AG04450 (cell line): ENCODE measurements at regions of chr4 and their contacts with region 1.

Region 1: DNA sequence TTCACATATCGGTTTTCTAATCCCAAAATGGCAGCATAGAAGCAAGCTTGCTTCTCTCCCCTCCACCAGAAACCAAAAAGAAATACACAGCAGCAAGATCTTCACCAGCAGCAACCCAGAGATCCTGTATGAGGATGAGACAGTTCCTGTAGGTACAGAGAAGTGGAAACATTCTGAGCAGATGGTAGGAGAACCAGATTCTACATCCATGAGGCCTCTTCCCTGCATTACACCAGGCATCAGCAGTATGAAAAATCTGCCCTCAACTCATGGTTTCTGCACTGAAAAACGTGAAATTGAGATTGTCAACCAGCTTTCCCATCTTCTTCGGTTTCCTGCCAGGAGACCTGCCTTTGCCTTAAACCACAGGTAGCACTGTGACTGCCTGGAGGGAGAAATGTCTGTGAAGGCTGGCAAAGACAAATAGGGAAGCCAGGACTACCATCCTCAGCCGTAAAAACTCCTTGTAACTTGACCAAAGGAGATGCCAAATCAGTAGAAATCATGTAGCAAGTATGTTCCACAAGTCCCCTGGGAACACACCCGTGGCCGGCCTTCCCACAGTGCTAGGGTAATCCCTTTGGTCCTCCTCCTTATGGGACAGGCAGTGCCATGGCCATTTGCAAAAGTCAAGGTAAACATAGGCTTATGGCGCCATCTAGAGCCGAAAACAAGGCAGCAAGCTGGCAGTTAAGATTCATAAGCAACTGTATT is 24.0 kb upstream of the MTHFD2L start:
- DNase-seq: peak; percentile 65
- H3K4me3 ChIP-seq: no peak overlapping the region
- H3K27ac ChIP-seq: no peak overlapping the region
- H3K27me3 ChIP-seq: no peaks in the 10 kb centered on the region
- CTCF ChIP-seq: peak; percentile 92

Region 2: GRCh38 chr4:73573794-73574406 is 560.0 kb before region 1 on chr4:
- CTCF ChIA-PET with region 1: interaction called, 60 read pairs
- POLR2A ChIA-PET with region 1: no interaction called
- DNase-seq: peak; percentile 75
- H3K4me3 ChIP-seq: no peak overlapping the region
- H3K27ac ChIP-seq: no peak overlapping the region
- H3K27me3 ChIP-seq: peaks cover 3% of the 10 kb centered on the region
- CTCF ChIP-seq: peak; percentile 99

Region 3: DNA sequence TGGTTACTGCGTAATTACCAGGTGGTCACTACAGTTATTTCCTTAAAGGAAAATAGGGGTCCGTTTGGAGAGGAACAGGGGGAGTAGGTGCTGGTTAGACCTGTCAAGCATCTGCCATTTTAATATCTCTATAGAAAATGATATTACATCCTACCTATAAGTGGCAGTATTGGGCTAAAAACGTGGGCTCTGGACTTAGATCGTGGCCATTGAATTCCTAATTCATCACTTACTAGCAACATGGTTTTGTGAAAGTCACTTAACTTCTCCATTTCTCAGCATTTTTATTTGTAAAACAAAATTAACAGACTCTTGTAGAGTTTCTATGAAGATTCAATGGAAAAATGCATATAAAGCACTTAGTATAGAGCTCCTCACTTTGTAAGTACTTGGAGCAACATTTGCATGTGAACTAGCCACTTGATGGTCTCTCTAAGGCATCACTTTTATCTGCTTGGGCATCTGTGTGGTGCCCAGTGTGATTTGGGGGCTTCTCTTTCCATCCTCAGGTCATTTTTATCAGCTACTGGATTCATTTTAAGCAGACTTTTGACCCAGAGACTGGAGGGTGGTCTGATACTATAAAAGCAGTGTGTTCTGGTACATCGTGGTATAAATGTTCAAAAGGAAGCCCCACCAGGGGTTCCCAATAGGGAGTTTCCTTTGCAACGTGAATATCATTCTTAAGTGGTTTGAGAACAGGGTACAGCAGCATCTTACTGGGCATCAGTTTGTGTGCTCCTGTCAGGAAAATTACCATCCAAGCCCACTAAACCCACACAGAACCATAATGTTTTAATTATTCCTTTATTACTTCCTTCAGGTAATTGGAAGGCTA is 471.0 kb before region 1 on chr4:
- CTCF ChIA-PET with region 1: interaction called, 92 read pairs
- POLR2A ChIA-PET with region 1: no interaction called
- DNase-seq: no peak
- H3K4me3 ChIP-seq: no peak overlapping the region
- H3K27ac ChIP-seq: no peak overlapping the region
- H3K27me3 ChIP-seq: no peaks in the 10 kb centered on the region
- CTCF ChIP-seq: peak; percentile 60

Region 4: DNA sequence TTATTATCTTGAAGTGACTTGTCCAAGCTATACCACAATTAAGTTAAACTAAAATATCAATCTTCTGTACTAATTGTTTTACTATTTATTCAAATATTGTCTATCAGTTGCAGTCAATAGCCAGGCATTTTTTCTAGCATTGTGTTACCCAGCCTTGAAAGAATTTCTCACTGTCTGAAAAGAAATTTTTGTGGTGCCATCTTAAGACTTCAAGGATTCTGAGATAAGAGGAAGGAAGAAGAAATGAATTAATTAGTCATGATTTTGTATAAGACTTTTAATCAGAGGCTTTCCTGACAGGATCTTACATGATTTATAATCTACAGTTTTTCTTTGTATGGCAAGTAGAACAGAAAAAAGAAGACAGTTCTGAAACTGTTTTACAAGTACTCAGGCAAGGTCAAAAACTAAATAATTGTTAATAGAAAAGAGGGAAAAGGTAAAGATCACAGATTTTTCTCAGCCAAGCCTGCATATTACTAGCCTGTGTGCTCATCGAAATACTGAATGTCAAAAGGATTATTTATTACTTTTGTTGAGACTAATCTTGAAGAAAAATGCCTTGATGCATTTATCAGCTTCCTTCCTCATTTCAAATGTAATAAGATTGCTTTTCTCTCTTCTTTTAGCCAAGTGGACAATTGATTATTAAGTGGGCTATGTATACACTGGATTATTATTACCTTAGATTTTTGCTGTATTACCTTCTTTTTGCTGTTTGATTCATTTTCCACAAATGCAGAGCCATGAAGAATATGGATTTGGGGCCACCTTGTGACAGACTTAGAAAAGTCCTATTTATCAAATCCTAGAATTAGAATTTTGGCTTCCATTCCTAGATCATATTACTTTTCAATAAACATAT is 210.9 kb before region 1 on chr4:
- CTCF ChIA-PET with region 1: interaction called, 20 read pairs
- POLR2A ChIA-PET with region 1: no interaction called
- DNase-seq: no peak
- H3K4me3 ChIP-seq: no peak overlapping the region
- H3K27ac ChIP-seq: no peak overlapping the region
- H3K27me3 ChIP-seq: no peaks in the 10 kb centered on the region
- CTCF ChIP-seq: peak; percentile 54

Region 5: GRCh38 chr4:74109116-74109869 is 24.6 kb before region 1 on chr4:
- CTCF ChIA-PET with region 1: interaction called, 12 read pairs
- POLR2A ChIA-PET with region 1: no interaction called
- DNase-seq: peak; percentile 74
- H3K4me3 ChIP-seq: no peak overlapping the region
- H3K27ac ChIP-seq: peak overlapping the region; percentile 92
- H3K27me3 ChIP-seq: no peaks in the 10 kb centered on the region
- CTCF ChIP-seq: no peak